Heart right ventricle (tissue), 16 donors: ENCODE measurements at regions of chr20 and their contacts with region 1.

Region 1: GRCh38 chr20:54887163-54887562 is 411.8 kb downstream of the DOK5 start:
- DNase-seq: no peak
- ATAC-seq: no peak
- H3K4me3 ChIP-seq: no peak overlapping the region
- H3K27ac ChIP-seq: no peak overlapping the region
- H3K4me1 ChIP-seq: no peaks in the 10 kb centered on the region
- H3K27me3 ChIP-seq: no peaks in the 10 kb centered on the region
- CTCF ChIP-seq: no peak

Region 2: GRCh38 chr20:54668271-54669039 is 218.7 kb before region 1 on chr20:
- intact Hi-C with region 1: no loop called
- DNase-seq: no peak
- ATAC-seq: no peak
- H3K4me3 ChIP-seq: peak overlapping the region in 1 of 10 donors; percentile 8
- H3K27ac ChIP-seq: no peak overlapping the region
- H3K4me1 ChIP-seq: peaks cover 0 to 6% (median 0%) of the 10 kb centered on the region in 9 donors
- H3K27me3 ChIP-seq: peaks cover 0 to 35% (median 6%) of the 10 kb centered on the region in 7 donors
- CTCF ChIP-seq: peak; percentile 10 to 76 (median 67)

Region 3: GRCh38 chr20:54941666-54942065 is 54.5 kb after region 1 on chr20:
- intact Hi-C with region 1: loop called in 1 of 10 experiments (anchors 10 kb)
- DNase-seq: no peak
- ATAC-seq: no peak
- H3K4me3 ChIP-seq: no peak overlapping the region
- H3K27ac ChIP-seq: no peak overlapping the region
- H3K4me1 ChIP-seq: no peaks in the 10 kb centered on the region
- H3K27me3 ChIP-seq: peaks cover 0 to 8% (median 0%) of the 10 kb centered on the region in 7 donors
- CTCF ChIP-seq: no peak